ENCODE measurements at regions of chr22 and their contacts with region 1.

Region 1: DNA sequence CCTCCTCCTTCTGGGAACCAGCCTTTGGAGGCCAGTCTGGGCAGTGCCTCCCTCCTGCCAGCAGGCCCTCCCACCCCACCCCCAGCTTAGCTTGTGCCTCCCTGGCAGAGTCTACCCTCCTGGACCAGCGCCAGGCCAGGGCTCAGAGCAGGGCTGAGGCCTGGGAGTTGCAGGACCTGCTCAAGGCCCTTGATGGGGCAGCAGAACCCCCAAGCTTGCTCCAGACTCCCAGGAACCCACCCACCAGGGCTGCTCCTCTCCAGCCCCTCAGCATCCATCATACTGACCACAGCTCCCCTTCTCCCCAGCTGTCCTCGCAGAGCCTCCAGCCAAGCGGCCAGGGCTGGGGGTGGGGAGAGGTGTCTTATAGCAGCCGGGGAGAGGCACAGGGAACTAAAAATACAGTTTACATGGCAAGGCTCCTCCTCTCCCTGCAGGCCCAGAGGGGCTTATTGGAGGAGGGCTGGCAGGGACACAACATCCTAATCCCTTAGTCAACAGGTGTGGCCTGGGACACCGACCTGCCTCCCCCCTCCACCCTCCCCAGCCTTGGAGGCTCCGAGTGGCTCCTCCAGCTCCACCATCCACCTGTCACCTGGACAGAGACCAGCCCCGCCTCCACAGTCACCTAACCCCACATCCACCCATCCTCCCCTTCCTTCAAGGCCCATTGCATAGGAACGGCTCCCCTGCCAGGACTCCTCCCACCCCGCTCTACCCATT is 5.2 kb upstream of the MB start:
- DNase-seq: peak; percentile 88
- H3K4me3 ChIP-seq: no peak overlapping the region
- H3K27ac ChIP-seq: peak overlapping the region; percentile 80 to 85 (median 82)
- H3K4me1 ChIP-seq: peaks cover 0 to 42% (median 36%) of the 10 kb centered on the region in 4 donors
- H3K27me3 ChIP-seq: no peaks in the 10 kb centered on the region
- CTCF ChIP-seq: no peak
- EP300 ChIP-seq: peak in 1 of 4 donors; percentile 2
- POLR2A ChIP-seq: no peak

Region 2: GRCh38 chr22:35446365-35446764 is 176.0 kb before region 1 on chr22:
- intact Hi-C with region 1: loop called (anchors 5 kb)
- DNase-seq: peak; percentile 91
- H3K4me3 ChIP-seq: no peak overlapping the region
- H3K27ac ChIP-seq: peak overlapping the region; percentile 55 to 87 (median 85)
- H3K4me1 ChIP-seq: peaks cover 0 to 58% (median 31%) of the 10 kb centered on the region in 4 donors
- H3K27me3 ChIP-seq: no peaks in the 10 kb centered on the region
- CTCF ChIP-seq: no peak
- EP300 ChIP-seq: peak in 2 of 4 donors; percentile 23 to 77
- POLR2A ChIP-seq: no peak

Region 3: DNA sequence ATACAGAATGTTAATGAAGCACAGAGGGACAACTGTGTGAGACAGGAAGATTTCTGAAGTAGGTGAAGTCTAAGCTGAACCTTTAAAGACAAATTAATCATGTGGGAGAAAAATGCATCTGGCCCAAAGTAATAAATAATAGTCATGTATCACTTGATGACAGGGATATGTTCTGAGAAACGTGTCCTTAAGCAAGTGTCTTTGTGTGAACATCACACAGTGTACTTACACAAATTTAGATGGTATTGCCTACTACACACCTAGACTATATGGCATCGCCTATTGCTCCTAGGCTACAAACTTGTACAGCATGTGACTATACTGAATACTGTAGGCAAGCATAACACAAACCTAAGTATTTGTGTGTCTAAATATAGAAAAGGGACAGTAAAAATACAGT is 208.0 kb after region 1 on chr22:
- intact Hi-C with region 1: no loop called
- DNase-seq: no peak
- H3K4me3 ChIP-seq: no peak overlapping the region
- H3K27ac ChIP-seq: peak overlapping the region in 2 of 4 donors; percentile 40 to 59
- H3K4me1 ChIP-seq: peaks cover 0 to 79% (median 64%) of the 10 kb centered on the region in 4 donors
- H3K27me3 ChIP-seq: no peaks in the 10 kb centered on the region
- CTCF ChIP-seq: no peak
- EP300 ChIP-seq: no peak
- POLR2A ChIP-seq: no peak

Region 4: DNA sequence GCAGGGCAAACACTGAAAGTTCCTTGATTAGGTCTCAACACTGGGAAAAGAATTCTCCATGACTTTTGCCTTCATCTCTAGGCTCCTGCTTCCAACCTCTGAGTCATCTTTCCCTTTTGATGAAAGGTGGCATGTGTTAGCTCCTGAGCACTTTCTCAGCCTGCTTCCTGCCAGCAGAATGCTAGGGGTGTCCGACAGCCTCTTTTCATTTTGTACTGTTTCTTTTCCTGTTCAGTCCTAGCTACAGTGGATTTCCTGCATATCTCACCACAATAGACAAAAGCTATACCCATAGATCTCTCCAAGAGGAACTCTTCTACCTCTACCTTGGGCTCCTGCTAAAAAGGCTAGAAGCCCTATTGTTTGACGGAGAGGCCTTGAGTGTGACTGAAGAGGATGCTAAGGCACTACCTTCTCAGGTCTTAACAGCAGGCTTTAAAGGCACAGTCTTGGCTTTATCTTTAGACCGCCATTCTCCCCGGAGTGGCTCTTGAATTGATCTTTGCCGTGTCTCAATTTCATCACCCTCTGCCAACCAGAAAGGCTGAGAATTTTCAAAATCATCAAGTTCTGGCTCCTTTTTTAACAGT is 260.8 kb after region 1 on chr22:
- intact Hi-C with region 1: no loop called
- DNase-seq: no peak
- H3K4me3 ChIP-seq: no peak overlapping the region
- H3K27ac ChIP-seq: peak overlapping the region in 2 of 4 donors; percentile 41 to 73
- H3K4me1 ChIP-seq: peaks cover 0 to 69% (median 60%) of the 10 kb centered on the region in 4 donors
- H3K27me3 ChIP-seq: no peaks in the 10 kb centered on the region
- CTCF ChIP-seq: no peak
- EP300 ChIP-seq: no peak
- POLR2A ChIP-seq: no peak